Common myeloid progenitor, CD34-positive (primary cell): ENCODE measurements at regions of chr9 and their contacts with region 1.

Region 1: GRCh38 chr9:98998441-98999151 is 54.9 kb downstream of the COL15A1 start:
- DNase-seq: peak; percentile 32 to 44 (median 39)
- H3K4me3 ChIP-seq: no peak overlapping the region
- H3K27ac ChIP-seq: no peak overlapping the region
- H3K4me1 ChIP-seq: peaks cover 0 to 32% (median 20%) of the 10 kb centered on the region in 4 experiments
- H3K27me3 ChIP-seq: no peaks in the 10 kb centered on the region

Region 2: GRCh38 chr9:98838155-98838867 is 160.3 kb before region 1 on chr9:
- CTCF ChIA-PET with region 1: interaction called, 10 read pairs
- POLR2A ChIA-PET with region 1: no interaction called
- DNase-seq: no peak
- H3K4me3 ChIP-seq: no peak overlapping the region
- H3K27ac ChIP-seq: no peak overlapping the region
- H3K4me1 ChIP-seq: no peaks in the 10 kb centered on the region
- H3K27me3 ChIP-seq: no peaks in the 10 kb centered on the region

Region 3: GRCh38 chr9:98860871-98861293 is 137.7 kb before region 1 on chr9:
- CTCF ChIA-PET with region 1: interaction called, 70 read pairs
- POLR2A ChIA-PET with region 1: no interaction called
- DNase-seq: peak in 2 of 3 donors; percentile 22 to 25
- H3K4me3 ChIP-seq: no peak overlapping the region
- H3K27ac ChIP-seq: no peak overlapping the region
- H3K4me1 ChIP-seq: peaks cover 0 to 3% (median 0%) of the 10 kb centered on the region in 4 experiments
- H3K27me3 ChIP-seq: no peaks in the 10 kb centered on the region

Region 4: DNA sequence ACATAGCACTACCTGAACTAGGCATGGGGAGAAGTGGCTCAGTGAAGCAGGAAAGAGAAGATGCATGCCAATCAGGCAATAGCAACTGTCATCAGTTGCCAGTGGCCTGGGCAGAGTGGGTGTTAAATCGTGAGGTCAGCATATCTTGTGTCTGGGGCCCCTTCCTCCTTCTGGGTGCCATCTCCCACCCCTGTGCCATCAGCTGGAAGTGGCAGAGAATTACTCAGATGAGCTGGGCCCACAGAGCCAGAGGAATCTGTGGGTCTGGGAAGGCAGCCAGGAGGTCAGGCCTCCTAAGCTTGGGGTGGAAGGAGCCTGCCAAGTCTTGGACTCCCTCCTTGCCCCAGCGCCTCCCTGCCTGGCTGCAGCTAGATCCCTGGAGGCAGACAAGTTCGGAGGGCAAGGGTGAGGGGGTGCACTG is 124.6 kb before region 1 on chr9:
- CTCF ChIA-PET with region 1: no interaction called
- POLR2A ChIA-PET with region 1: no interaction called
- DNase-seq: no peak
- H3K4me3 ChIP-seq: no peak overlapping the region
- H3K27ac ChIP-seq: no peak overlapping the region
- H3K4me1 ChIP-seq: peaks cover 0 to 3% (median 0%) of the 10 kb centered on the region in 4 experiments
- H3K27me3 ChIP-seq: no peaks in the 10 kb centered on the region

Region 5: DNA sequence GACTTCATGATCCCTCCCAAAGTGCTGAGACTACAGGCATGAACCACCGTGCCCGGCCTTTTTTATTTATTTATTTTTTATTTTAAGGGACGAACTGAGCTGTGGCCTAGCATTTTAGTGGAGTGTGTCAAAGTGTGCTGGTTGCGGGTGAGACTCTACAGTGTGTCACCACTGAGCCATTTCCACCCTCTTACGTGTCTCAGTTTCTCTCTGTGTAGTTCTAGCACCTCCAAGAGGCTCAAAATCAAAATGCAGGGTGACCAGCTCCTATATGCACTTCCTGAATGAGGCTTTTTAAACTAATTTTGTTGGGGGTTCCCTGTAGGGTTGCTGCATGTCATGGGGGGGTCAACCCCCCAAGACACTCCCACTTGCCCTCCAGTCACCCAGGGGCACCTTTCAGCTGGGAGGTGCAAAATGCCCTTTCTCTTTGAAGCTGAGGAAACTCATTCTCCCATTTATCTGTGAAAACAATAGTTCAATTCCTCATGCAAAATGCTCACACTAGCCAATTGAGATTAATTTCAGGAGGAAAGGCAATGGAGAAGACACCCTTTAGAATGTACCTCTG is 14.4 kb after region 1 on chr9:
- CTCF ChIA-PET with region 1: interaction called, 11 read pairs
- POLR2A ChIA-PET with region 1: no interaction called
- DNase-seq: no peak
- H3K4me3 ChIP-seq: no peak overlapping the region
- H3K27ac ChIP-seq: no peak overlapping the region
- H3K4me1 ChIP-seq: peaks cover 0 to 6% (median 3%) of the 10 kb centered on the region in 4 experiments
- H3K27me3 ChIP-seq: no peaks in the 10 kb centered on the region

Region 6: GRCh38 chr9:99104459-99105151 is 106.0 kb after region 1 on chr9 and contains the start of gene TGFBR1:
- CTCF ChIA-PET with region 1: interaction called, 11 read pairs
- POLR2A ChIA-PET with region 1: no interaction called
- DNase-seq: peak; percentile 90 to 94 (median 94)
- H3K4me3 ChIP-seq: peak within 1 kb of the TSS; percentile 47 to 91 (median 81)
- H3K27ac ChIP-seq: peak within 1 kb of the TSS; percentile 40 to 81
- H3K4me1 ChIP-seq: peaks cover 35 to 49% (median 46%) of the 10 kb centered on the region in 4 experiments
- H3K27me3 ChIP-seq: no peaks in the 10 kb centered on the region